Activated T-helper 1 cell treated with anti-CD3 and anti-CD28 coated beads, Interleukin-12 subunit alpha, Interleukin-12 subunit beta, Interleukin-2, Interleukin-4 antibody, amounts not matched to agents 30 ng/mL and 10 ng/mL and 1 ng/mL, durations not matched to agents 14 hours and 24 hours and 36 hours (primary cell): ENCODE measurements at regions of chr18 and their contacts with region 1.

Region 1: DNA sequence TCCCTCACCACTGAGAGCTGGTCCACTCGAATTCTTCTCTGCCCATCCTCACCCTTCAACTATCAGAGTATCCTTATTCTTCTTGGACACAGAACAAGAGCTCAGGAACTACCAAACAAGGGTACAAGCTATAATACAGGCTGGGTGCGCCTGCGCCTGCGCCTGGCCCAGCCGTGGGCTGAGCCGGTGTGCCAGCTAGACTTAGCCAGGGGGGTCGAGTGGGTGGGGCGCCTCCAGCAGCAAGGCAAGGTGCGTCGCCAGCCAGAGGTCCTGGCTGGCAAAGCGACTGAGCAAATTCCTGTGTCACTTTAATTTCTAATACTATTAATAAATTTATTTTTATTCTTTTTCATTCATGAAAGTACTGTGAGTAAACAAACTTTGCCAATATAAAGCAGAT is 1072.6 kb upstream of the PIK3C3 start:
- DNase-seq: no peak
- H3K4me3 Mint-ChIP-seq: no peak overlapping the region
- H3K27ac Mint-ChIP-seq: no peak overlapping the region
- H3K4me1 Mint-ChIP-seq: no peaks in the 10 kb centered on the region
- H3K27me3 Mint-ChIP-seq: no peaks in the 10 kb centered on the region

Region 2: GRCh38 chr18:40904295-40904694 is 21.8 kb after region 1 on chr18:
- intact Hi-C with region 1: no loop called
- DNase-seq: no peak
- H3K4me3 Mint-ChIP-seq: no peak overlapping the region
- H3K27ac Mint-ChIP-seq: no peak overlapping the region
- H3K4me1 Mint-ChIP-seq: no peaks in the 10 kb centered on the region
- H3K27me3 Mint-ChIP-seq: no peaks in the 10 kb centered on the region

Region 3: DNA sequence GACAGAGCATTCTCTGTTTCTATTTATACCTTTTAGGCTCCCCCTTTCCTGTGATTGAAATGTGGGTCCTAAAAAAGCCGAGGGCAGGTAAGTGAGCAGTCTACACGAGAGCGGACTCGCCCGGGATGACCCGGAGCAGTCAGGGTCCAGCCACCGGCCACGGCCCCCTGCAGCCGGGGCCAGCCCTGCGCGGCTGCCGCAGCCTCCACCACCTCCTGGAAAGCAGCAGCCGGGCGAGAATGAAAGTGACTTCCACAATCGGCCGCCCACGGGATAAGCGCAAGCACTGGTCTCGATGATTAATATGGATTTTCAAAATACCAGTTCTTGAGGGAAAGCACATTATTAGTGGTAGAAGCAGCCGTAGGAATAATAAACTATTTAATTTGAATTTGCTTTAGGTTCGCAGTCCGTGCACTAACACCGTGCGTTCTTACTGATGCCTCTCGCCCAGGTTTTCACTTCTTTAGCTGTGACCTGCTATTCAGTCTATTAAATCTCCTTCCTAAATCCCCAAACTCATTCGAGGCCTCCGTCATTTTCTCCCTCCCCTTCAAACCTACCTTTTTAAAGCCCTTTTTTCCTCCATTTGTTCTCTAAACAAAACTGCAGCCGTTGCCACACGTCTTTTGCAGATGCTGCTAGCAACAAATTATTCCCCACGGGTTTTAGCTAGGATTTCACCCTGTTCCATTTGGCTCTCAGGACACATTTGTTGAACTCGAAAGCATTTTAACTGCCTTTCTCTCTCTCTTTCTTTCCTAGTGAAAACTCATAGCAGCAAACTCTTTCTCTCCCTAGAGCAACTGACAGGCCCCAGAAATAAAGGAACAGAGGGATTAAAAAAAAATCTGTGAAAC is 57.4 kb after region 1 on chr18:
- intact Hi-C with region 1: loop called (anchors 10 kb)
- DNase-seq: no peak
- H3K4me3 Mint-ChIP-seq: no peak overlapping the region
- H3K27ac Mint-ChIP-seq: no peak overlapping the region
- H3K4me1 Mint-ChIP-seq: no peaks in the 10 kb centered on the region
- H3K27me3 Mint-ChIP-seq: no peaks in the 10 kb centered on the region